ENCODE measurements at regions of chr11 and their contacts with region 1.

Region 1: GRCh38 chr11:6682936-6683861 is at the start of gene MRPL17:
- DNase-seq: peak; percentile 95
- H3K4me3 ChIP-seq: peak within 1 kb of the TSS; percentile 99
- H3K27ac ChIP-seq: peak within 1 kb of the TSS; percentile 76 to 95
- H3K4me1 ChIP-seq: peaks cover 5 to 14% of the 10 kb centered on the region in 2 experiments; a peak in 3 of 4 replicates
- H3K27me3 ChIP-seq: no peaks in the 10 kb centered on the region
- CTCF ChIP-seq: peak; percentile 91
- EP300 ChIP-seq: peak in 1 of 2 experiments; percentile 13; a peak in 2 of 4 replicates
- RAD21 ChIP-seq: peak; percentile 81
- polyA plus RNA-seq, gene MRPL17: 88.3 and 88.6 TPM in 2 replicates

Region 2: DNA sequence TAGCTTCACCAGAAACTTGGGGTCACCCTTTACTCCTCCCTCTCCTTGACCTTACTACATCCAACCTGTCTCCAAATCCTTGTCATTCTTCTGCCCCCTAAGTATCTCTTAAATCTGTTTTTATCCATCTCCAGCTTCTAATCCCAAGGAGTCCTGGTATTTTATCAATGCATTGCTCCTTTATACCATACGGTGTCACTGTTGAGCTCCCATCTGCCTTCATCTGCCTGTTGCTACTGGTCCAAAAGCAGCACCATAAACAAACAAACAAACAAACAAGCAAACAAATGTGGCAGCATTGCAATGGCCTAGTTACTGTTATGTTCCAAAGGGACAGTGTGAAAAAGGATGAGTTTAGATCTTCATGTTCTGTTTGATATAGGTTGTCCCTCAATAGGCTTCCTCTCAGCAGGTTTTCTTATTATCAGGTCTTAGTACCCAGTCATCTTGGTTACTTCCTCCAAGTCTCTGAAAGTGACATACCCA is 151.9 kb before region 1 on chr11:
- CTCF ChIA-PET with region 1: interaction called, 20 read pairs
- POLR2A ChIA-PET with region 1: interaction called, 5 read pairs
- DNase-seq: peak; percentile 61
- H3K4me3 ChIP-seq: no peak overlapping the region
- H3K27ac ChIP-seq: no peak overlapping the region
- H3K4me1 ChIP-seq: peaks cover 0 to 3% of the 10 kb centered on the region in 2 experiments; a peak in 2 of 4 replicates
- H3K27me3 ChIP-seq: no peaks in the 10 kb centered on the region
- CTCF ChIP-seq: peak; percentile 91
- EP300 ChIP-seq: no peak
- RAD21 ChIP-seq: peak; percentile 85

Region 3: DNA sequence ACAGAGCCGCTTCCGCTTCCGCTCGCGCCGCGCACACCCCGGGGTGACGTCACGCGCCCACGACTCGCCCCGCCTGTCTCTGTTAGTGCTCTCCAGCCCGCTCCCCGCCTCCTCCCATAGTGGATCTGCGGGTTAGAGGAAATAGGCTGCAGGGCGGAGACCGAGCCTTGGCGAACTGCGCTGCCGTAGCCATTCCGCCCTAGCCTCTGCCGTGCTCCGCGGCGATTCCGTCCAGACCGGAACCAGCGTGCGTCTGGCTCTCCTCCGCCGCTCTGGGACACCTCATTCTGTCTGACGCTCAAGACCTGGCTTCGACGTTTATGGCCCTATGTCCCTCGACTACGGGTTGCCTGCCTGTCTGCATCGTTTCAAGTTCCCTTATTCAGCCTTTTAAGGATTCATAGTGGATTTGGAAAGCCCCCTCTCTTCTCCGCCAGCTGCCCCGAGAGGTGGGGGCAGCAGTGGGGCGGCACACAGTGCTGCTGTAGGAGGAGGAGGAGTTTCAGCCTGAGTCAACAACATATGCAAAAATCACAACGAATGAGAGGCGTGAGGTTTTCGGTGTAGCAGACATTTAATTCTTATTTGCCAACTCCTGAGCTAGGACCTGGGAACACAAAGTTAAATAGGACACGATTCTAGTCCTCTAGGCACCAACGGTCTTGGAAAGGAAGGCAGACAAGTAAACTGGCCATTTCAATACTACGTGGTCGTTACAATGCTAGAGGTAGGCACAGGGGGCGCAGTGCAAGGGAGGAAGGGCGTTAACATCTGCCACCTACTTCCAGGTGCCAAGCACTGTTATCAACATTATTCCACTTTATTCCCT is 70.8 kb before region 1 on chr11 and contains the start of gene TAF10:
- CTCF ChIA-PET with region 1: interaction called, 18 read pairs
- POLR2A ChIA-PET with region 1: interaction called, 10 read pairs
- DNase-seq: peak; percentile 95
- H3K4me3 ChIP-seq: peak within 1 kb of the TSS; percentile 65 to 93
- H3K27ac ChIP-seq: peak within 1 kb of the TSS; percentile 94 to 99
- H3K4me1 ChIP-seq: peaks cover 10 to 32% of the 10 kb centered on the region in 2 experiments
- H3K27me3 ChIP-seq: no peaks in the 10 kb centered on the region
- CTCF ChIP-seq: peak; percentile 62
- EP300 ChIP-seq: no peak
- RAD21 ChIP-seq: no peak
- polyA plus RNA-seq, gene TAF10: 163 and 213 TPM in 2 replicates

Region 4: GRCh38 chr11:6646918-6647679 is 36.1 kb before region 1 on chr11:
- CTCF ChIA-PET with region 1: interaction called, 10 read pairs
- POLR2A ChIA-PET with region 1: interaction called, 22 read pairs
- DNase-seq: peak; percentile 73
- H3K4me3 ChIP-seq: peak overlapping the region in 1 of 2 experiments; percentile 26; a peak in 1 of 4 replicates
- H3K27ac ChIP-seq: peak overlapping the region; percentile 13 to 98; a peak in 3 of 4 replicates
- H3K4me1 ChIP-seq: peaks cover 6 to 40% of the 10 kb centered on the region in 2 experiments; a peak in 2 of 4 replicates
- H3K27me3 ChIP-seq: no peaks in the 10 kb centered on the region
- CTCF ChIP-seq: no peak
- EP300 ChIP-seq: no peak
- RAD21 ChIP-seq: no peak

Region 5: DNA sequence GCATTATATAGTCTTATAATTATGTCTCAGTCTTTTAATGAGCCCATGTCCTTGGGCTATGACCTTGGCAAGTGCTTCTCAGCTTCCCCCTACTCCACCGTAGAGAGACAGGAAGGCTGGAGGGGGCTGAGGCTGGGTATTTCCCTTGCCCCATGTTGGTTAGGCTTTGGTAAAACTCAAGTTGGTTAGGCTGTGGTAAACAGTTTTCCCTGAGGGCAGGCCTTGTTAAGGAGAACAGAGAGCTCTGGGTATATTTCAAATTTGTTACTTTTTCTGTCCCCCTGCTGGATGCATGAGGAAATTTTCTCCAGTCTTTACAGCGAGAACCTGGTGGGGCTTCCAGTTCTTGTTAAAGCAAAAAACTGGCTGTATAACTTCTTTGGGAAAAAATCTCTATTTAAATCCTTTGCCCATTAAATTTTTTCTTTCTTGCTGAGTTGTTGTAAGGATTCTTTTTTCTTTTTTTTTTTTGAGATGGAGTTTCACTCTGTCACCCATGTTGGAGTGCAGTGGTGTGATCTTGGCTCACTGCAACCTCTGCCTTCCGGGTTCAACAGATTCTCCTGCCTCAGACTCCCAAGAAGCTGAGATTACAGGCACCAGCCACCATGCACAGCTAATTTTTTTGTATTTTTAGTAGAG is 15.3 kb before region 1 on chr11:
- CTCF ChIA-PET with region 1: interaction called, 19 read pairs
- POLR2A ChIA-PET with region 1: no interaction called
- DNase-seq: no peak
- H3K4me3 ChIP-seq: no peak overlapping the region
- H3K27ac ChIP-seq: no peak overlapping the region
- H3K4me1 ChIP-seq: no peaks in the 10 kb centered on the region
- H3K27me3 ChIP-seq: no peaks in the 10 kb centered on the region
- CTCF ChIP-seq: peak; percentile 57
- EP300 ChIP-seq: no peak
- RAD21 ChIP-seq: peak; percentile 18; the same call in 1 of the 2 replicates

Region 6: GRCh38 chr11:6735306-6735705 is 52.1 kb after region 1 on chr11:
- CTCF ChIA-PET with region 1: no interaction called
- POLR2A ChIA-PET with region 1: no interaction called
- DNase-seq: no peak
- H3K4me3 ChIP-seq: no peak overlapping the region
- H3K27ac ChIP-seq: no peak overlapping the region
- H3K4me1 ChIP-seq: no peaks in the 10 kb centered on the region
- H3K27me3 ChIP-seq: no peaks in the 10 kb centered on the region; the same call in 1 of the 2 replicates
- CTCF ChIP-seq: no peak
- EP300 ChIP-seq: no peak
- RAD21 ChIP-seq: no peak

Region 7: GRCh38 chr11:6850526-6850925 is 167.3 kb after region 1 on chr11:
- CTCF ChIA-PET with region 1: no interaction called
- POLR2A ChIA-PET with region 1: no interaction called
- DNase-seq: no peak
- H3K4me3 ChIP-seq: no peak overlapping the region
- H3K27ac ChIP-seq: no peak overlapping the region
- H3K4me1 ChIP-seq: no peaks in the 10 kb centered on the region
- H3K27me3 ChIP-seq: no peaks in the 10 kb centered on the region
- CTCF ChIP-seq: no peak
- EP300 ChIP-seq: no peak
- RAD21 ChIP-seq: no peak